Adrenal gland (tissue), 19 donors: ENCODE measurements at regions of chr5 and their contacts with region 1.

Region 1: GRCh38 chr5:4941957-4942830 is 197.9 kb upstream of the ADAMTS16 start:
- DNase-seq: peak in 3 of 7 donors; percentile 4 to 21 (median 20)
- H3K4me3 ChIP-seq: no peak overlapping the region
- H3K27ac ChIP-seq: no peak overlapping the region
- H3K4me1 ChIP-seq: no peaks in the 10 kb centered on the region
- H3K27me3 ChIP-seq: no peaks in the 10 kb centered on the region
- CTCF ChIP-seq: peak; percentile 49 to 80 (median 70)
- POLR2A ChIP-seq: no peak

Region 2: DNA sequence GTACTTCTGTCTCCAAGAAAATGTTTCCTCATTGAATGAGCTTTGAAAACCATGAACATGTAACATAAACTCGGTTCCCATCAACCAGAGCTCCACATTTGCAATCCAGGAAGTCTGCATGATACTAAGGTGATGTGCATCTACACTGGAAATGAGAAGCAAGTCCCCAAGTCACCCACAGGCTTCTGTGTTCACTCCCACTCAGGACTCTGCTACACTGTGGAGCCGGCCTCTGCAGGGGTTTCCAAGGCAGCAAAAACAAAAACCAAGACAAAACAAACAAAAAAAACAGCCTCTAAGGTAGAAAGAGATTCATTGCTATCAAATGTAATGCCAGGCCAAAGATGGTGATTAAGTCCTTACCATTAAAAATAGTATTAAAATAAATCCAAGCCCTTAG is 752.9 kb before region 1 on chr5:
- intact Hi-C with region 1: no loop called
- DNase-seq: peak in 1 of 7 donors; percentile 9
- H3K4me3 ChIP-seq: no peak overlapping the region
- H3K27ac ChIP-seq: no peak overlapping the region
- H3K4me1 ChIP-seq: no peaks in the 10 kb centered on the region
- H3K27me3 ChIP-seq: no peaks in the 10 kb centered on the region
- CTCF ChIP-seq: no peak
- POLR2A ChIP-seq: no peak

Region 3: GRCh38 chr5:4873652-4874051 is 68.5 kb before region 1 on chr5:
- intact Hi-C with region 1: loop called (anchors 5 kb)
- DNase-seq: no peak
- H3K4me3 ChIP-seq: no peak overlapping the region
- H3K27ac ChIP-seq: no peak overlapping the region
- H3K4me1 ChIP-seq: no peaks in the 10 kb centered on the region
- H3K27me3 ChIP-seq: peaks cover 7% of the 10 kb centered on the region
- CTCF ChIP-seq: no peak
- POLR2A ChIP-seq: no peak

Region 4: GRCh38 chr5:4879693-4880303 is 62.4 kb before region 1 on chr5:
- intact Hi-C with region 1: loop called (anchors 5 kb)
- DNase-seq: peak; percentile 72 to 91 (median 82)
- H3K4me3 ChIP-seq: no peak overlapping the region
- H3K27ac ChIP-seq: no peak overlapping the region
- H3K4me1 ChIP-seq: no peaks in the 10 kb centered on the region
- H3K27me3 ChIP-seq: no peaks in the 10 kb centered on the region
- CTCF ChIP-seq: peak; percentile 75 to 95 (median 90)
- POLR2A ChIP-seq: no peak

Region 5: GRCh38 chr5:5116956-5117355 is 174.8 kb after region 1 on chr5:
- intact Hi-C with region 1: no loop called
- DNase-seq: no peak
- H3K4me3 ChIP-seq: no peak overlapping the region
- H3K27ac ChIP-seq: no peak overlapping the region
- H3K4me1 ChIP-seq: no peaks in the 10 kb centered on the region
- H3K27me3 ChIP-seq: peaks cover 6% of the 10 kb centered on the region
- CTCF ChIP-seq: no peak
- POLR2A ChIP-seq: no peak

Region 6: DNA sequence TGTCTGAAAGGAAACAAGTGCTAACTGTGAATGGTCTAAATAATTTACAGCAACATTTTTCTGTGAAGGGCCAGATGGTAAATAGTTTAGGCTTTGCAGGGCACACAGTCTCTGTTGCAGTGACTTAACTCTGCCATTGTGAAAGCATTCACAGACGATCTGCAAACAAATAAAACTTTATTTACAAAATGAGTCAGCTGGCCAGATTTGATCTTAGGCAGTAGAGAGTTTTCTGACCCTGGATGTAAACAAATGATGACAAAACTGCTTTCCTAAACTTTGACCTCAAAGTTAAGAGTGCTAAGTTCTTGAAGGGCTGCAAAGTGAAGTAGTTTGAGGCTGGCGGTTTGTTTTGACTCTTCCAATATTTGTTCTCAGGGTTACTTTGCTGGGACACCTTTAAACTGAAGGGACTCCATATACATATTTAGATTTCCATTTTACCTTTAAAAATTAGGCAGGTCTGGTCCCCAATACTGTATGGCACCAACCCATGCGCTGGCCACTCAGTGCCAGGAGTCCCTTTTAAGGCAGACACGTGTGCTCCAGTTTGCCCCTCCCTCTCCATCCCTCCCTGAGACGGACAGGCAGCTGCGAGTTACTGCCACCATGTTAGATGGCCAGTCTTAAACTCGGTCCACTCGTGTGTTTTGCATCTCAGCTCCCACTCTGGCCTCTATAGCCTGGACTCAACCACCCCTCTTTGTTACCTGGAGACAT is 193.9 kb after region 1 on chr5:
- intact Hi-C with region 1: no loop called
- DNase-seq: no peak
- H3K4me3 ChIP-seq: no peak overlapping the region
- H3K27ac ChIP-seq: no peak overlapping the region
- H3K4me1 ChIP-seq: peaks cover 0 to 6% of the 10 kb centered on the region in 2 donors
- H3K27me3 ChIP-seq: peaks cover 19% of the 10 kb centered on the region
- CTCF ChIP-seq: no peak
- POLR2A ChIP-seq: no peak